Activated CD4-positive, alpha-beta memory T cell treated with anti-CD3 and anti-CD28 coated beads for 36 hours (primary cell): ENCODE measurements at regions of chr9 and their contacts with region 1.

Region 1: GRCh38 chr9:104386425-104387069 is 117.5 kb upstream of the OR13F1 start:
- DNase-seq: no peak
- H3K4me3 Mint-ChIP-seq: no peak overlapping the region
- H3K27ac Mint-ChIP-seq: no peak overlapping the region
- H3K4me1 Mint-ChIP-seq: no peaks in the 10 kb centered on the region
- H3K27me3 Mint-ChIP-seq: no peaks in the 10 kb centered on the region

Region 2: GRCh38 chr9:104177003-104177611 is 209.4 kb before region 1 on chr9:
- CTCF ChIA-PET with region 1: interaction called, 3 read pairs
- POLR2A ChIA-PET with region 1: no interaction called
- intact Hi-C with region 1: loop called (anchors 1 kb)
- DNase-seq: no peak
- H3K4me3 Mint-ChIP-seq: no peak overlapping the region
- H3K27ac Mint-ChIP-seq: no peak overlapping the region
- H3K4me1 Mint-ChIP-seq: no peaks in the 10 kb centered on the region
- H3K27me3 Mint-ChIP-seq: peaks cover 1% of the 10 kb centered on the region

Region 3: DNA sequence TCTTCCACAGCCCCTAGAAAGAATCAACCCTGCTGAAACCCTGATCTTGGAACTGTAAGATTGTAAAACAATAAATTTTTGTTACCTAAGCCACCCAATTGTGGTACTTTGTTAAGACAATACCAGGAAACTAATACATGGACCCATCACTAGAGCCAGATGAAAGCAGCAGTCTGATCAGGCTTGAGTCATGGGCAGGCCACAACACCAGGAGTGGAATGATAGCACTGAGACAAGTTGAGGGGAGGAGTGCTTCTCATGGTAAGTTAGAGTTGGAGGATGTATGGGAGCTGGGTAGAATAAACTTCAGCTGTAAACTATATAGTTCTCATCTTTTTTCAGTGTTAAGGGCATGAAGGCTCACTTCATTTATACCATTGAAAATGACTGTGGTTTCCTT is 46.9 kb before region 1 on chr9:
- CTCF ChIA-PET with region 1: interaction called, 4 read pairs
- POLR2A ChIA-PET with region 1: no interaction called
- intact Hi-C with region 1: loop called (anchors 10 kb)
- DNase-seq: no peak
- H3K4me3 Mint-ChIP-seq: no peak overlapping the region
- H3K27ac Mint-ChIP-seq: no peak overlapping the region
- H3K4me1 Mint-ChIP-seq: no peaks in the 10 kb centered on the region
- H3K27me3 Mint-ChIP-seq: no peaks in the 10 kb centered on the region